Activated B cell treated with CpG ODN at 0.5 μM for 24 hours (primary cell): ENCODE measurements at regions of chr5 and their contacts with region 1.

Region 1: GRCh38 chr5:159038907-159039306 is 60.8 kb downstream of the EBF1 start:
- DNase-seq: no peak
- ATAC-seq: no peak
- H3K4me3 Mint-ChIP-seq: no peak overlapping the region
- H3K27ac Mint-ChIP-seq: peak overlapping the region; percentile 75
- H3K4me1 Mint-ChIP-seq: peaks cover 78% of the 10 kb centered on the region
- H3K27me3 Mint-ChIP-seq: no peaks in the 10 kb centered on the region
- CTCF ChIP-seq: no peak

Region 2: GRCh38 chr5:157548513-157549297 is 1490.2 kb before region 1 on chr5:
- CTCF ChIA-PET with region 1: no interaction called
- POLR2A ChIA-PET with region 1: interaction called, 18 read pairs
- intact Hi-C with region 1: no loop called
- DNase-seq: no peak
- ATAC-seq: peak; percentile 22
- H3K4me3 Mint-ChIP-seq: peak overlapping the region; percentile 48
- H3K27ac Mint-ChIP-seq: peak overlapping the region; percentile 83
- H3K4me1 Mint-ChIP-seq: peaks cover 93% of the 10 kb centered on the region
- H3K27me3 Mint-ChIP-seq: no peaks in the 10 kb centered on the region
- CTCF ChIP-seq: no peak